Dorsolateral prefrontal cortex (tissue), 120 donors: ENCODE measurements at regions of chr10 and their contacts with region 1.

Region 1: DNA sequence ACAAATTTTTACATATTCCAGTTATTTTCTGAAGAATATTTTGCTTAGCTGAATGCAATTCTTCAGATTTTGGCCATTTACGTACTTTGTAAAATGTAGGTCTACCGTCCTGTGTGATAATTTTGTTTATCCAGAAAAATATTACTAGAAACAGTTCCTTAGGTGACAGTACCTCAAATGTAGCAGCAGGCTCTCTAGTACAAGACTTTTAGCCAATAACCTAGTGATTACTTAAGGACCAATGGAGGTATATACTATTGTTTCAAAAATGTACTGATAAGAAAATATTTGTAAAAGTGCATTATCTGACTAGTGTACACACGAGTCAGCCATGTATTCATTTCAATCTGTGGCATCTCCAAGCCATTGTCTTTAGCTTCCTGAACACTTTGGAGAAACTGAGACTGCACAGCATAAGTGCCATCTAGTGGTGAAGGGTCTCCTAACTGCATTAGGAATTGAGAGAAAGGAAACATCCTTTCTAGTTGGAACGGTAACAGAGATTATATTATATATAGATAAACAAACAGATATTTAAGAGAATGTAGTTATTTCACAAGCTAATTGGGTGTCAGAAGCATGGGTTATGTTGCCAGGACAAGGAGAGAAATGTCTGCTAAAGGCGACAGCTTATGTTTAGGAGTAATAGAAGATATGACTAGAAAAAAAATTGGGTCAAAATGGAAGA is 23.7 kb downstream of the RTKN2 start:
- DNase-seq: peak in 4 of 10 donors; percentile 11 to 57 (median 22)
- H3K4me3 ChIP-seq: peak overlapping the region in 12 of 59 donors; percentile 3 to 29 (median 8)
- H3K27ac ChIP-seq: peak overlapping the region in 4 of 59 donors; percentile 6 to 39 (median 28)
- H3K27me3 ChIP-seq: no peaks in the 10 kb centered on the region
- CTCF ChIP-seq: peak; percentile 74 to 99 (median 93)

Region 2: DNA sequence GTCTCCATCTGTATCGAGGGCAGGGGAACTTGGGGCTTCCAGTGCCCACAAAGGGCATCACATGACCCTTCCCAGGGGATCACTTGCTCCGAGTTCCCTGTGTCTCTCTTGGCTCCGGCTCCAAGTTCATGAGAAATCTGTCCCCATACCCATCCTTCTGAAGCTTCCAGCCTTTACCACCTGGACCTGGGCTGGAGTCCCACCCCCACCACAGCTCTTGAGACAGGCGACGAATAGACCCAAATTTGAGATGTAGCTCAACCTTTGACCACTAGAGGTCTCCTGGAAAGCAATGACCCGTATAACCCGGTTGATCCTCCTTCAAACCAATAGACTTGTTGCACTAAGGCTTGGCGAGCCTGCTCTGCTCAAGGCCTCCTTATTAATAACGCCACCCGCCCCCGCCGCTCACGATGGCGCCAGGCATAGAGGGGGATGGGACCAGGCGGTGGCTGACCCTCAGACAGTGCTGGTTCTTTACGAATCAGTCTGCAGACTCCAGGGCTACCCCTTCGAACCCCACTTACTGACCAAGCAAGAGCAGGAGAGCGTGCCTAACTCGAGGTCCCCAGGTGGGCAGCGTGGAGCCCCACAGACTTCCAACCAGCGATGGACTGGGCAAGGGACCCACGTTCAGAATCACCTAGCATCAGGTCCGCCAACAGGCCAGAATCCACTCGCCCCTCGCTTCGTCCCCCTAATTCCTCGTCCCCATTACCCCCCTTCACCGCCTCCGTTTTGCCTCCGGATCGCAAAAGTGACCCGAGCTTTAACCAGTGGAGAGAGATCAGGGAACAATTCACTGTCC is 347.9 kb before region 1 on chr10:
- intact Hi-C with region 1: loop called (anchors 5 kb)
- DNase-seq: peak in 7 of 10 donors; percentile 26 to 59 (median 48)
- H3K4me3 ChIP-seq: peak overlapping the region; percentile 22 to 76 (median 58)
- H3K27ac ChIP-seq: peak overlapping the region in 47 of 59 donors; percentile 8 to 96 (median 61)
- H3K27me3 ChIP-seq: no peaks in the 10 kb centered on the region
- CTCF ChIP-seq: peak; percentile 34 to 80 (median 70)

Region 3: GRCh38 chr10:62297857-62298256 is 52.9 kb after region 1 on chr10:
- intact Hi-C with region 1: no loop called
- DNase-seq: peak in 4 of 10 donors; percentile 9 to 55 (median 46)
- H3K4me3 ChIP-seq: no peak overlapping the region
- H3K27ac ChIP-seq: peak overlapping the region in 13 of 59 donors; percentile 1 to 63 (median 34)
- H3K27me3 ChIP-seq: no peaks in the 10 kb centered on the region
- CTCF ChIP-seq: no peak

Region 4: GRCh38 chr10:62308101-62308500 is 63.2 kb after region 1 on chr10:
- intact Hi-C with region 1: no loop called
- DNase-seq: no peak
- H3K4me3 ChIP-seq: no peak overlapping the region
- H3K27ac ChIP-seq: peak overlapping the region in 26 of 59 donors; percentile 8 to 75 (median 52)
- H3K27me3 ChIP-seq: no peaks in the 10 kb centered on the region
- CTCF ChIP-seq: no peak